ENCODE measurements at regions of chrX and their contacts with region 1.

Region 1: GRCh38 chrX:123949846-123950245 is 11.7 kb upstream of the STAG2 start:
- DNase-seq: no peak
- H3K4me3 ChIP-seq: no peak overlapping the region
- H3K4me3 Mint-ChIP-seq: no peak overlapping the region
- H3K27ac Mint-ChIP-seq: no peak overlapping the region
- H3K4me1 ChIP-seq: peaks cover 11% of the 10 kb centered on the region
- H3K4me1 Mint-ChIP-seq: peaks cover 11% of the 10 kb centered on the region
- H3K27me3 ChIP-seq: no peaks in the 10 kb centered on the region
- H3K27me3 Mint-ChIP-seq: no peaks in the 10 kb centered on the region
- CTCF ChIP-seq: no peak

Region 2: DNA sequence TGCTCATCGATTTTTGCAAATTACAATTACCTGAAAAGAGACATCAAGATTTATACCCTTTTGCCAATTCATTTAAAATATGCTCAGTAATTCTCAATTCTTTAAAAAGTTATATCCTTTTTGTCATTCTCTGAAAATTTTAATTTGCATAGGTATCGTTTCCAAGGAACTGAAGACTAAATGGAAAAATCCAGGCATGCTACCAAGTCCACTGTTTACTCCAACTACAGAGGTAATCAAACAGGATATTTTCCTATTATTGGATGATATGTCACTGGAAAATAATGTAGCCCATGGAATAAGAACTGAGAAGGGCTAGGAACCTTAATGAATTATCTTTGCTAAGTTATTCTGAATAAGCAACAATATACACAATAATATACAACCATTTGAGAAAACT is 349.7 kb before region 1 on chrX:
- CTCF ChIA-PET with region 1: no interaction called
- POLR2A ChIA-PET with region 1: interaction called, 10 read pairs
- intact Hi-C with region 1: no loop called
- DNase-seq: no peak
- H3K4me3 ChIP-seq: no peak overlapping the region
- H3K4me3 Mint-ChIP-seq: no peak overlapping the region
- H3K27ac Mint-ChIP-seq: no peak overlapping the region
- H3K4me1 ChIP-seq: no peaks in the 10 kb centered on the region
- H3K4me1 Mint-ChIP-seq: no peaks in the 10 kb centered on the region
- H3K27me3 ChIP-seq: no peaks in the 10 kb centered on the region
- H3K27me3 Mint-ChIP-seq: no peaks in the 10 kb centered on the region
- CTCF ChIP-seq: no peak

Region 3: GRCh38 chrX:123918106-123918729 is 31.6 kb before region 1 on chrX:
- CTCF ChIA-PET with region 1: no interaction called
- POLR2A ChIA-PET with region 1: no interaction called
- intact Hi-C with region 1: loop called (anchors 5 kb)
- DNase-seq: no peak
- H3K4me3 ChIP-seq: no peak overlapping the region
- H3K4me3 Mint-ChIP-seq: peak overlapping the region; percentile 39
- H3K27ac Mint-ChIP-seq: no peak overlapping the region
- H3K4me1 ChIP-seq: peaks cover 29% of the 10 kb centered on the region
- H3K4me1 Mint-ChIP-seq: no peaks in the 10 kb centered on the region
- H3K27me3 ChIP-seq: no peaks in the 10 kb centered on the region
- H3K27me3 Mint-ChIP-seq: no peaks in the 10 kb centered on the region
- CTCF ChIP-seq: no peak

Region 4: GRCh38 chrX:123993326-123993725 is 43.5 kb after region 1 on chrX:
- CTCF ChIA-PET with region 1: no interaction called
- POLR2A ChIA-PET with region 1: no interaction called
- intact Hi-C with region 1: no loop called
- DNase-seq: no peak
- H3K4me3 ChIP-seq: no peak overlapping the region
- H3K4me3 Mint-ChIP-seq: no peak overlapping the region
- H3K27ac Mint-ChIP-seq: no peak overlapping the region
- H3K4me1 ChIP-seq: peaks cover 13% of the 10 kb centered on the region; the same call in 1 of the 2 replicates
- H3K4me1 Mint-ChIP-seq: peaks cover 14% of the 10 kb centered on the region
- H3K27me3 ChIP-seq: no peaks in the 10 kb centered on the region
- H3K27me3 Mint-ChIP-seq: no peaks in the 10 kb centered on the region
- CTCF ChIP-seq: no peak

Region 5: DNA sequence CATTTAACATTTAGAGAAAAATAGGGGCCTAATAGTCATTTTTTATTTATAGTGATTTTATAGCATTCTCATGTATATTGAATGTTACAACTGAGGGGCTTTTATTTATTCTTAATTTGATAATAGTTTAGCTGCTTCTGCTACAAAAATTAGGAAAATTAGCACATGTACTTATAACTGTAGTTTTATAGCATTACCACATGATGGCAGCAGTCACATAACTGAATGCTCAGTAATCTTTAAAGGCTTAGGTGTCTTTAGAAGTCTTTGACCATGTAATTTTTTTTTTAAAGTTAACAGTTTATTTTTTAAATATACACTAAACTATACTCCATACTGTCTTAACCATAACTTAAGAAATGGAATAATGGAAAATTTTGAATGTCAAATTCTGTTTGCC is 148.2 kb after region 1 on chrX:
- CTCF ChIA-PET with region 1: no interaction called
- POLR2A ChIA-PET with region 1: no interaction called
- intact Hi-C with region 1: no loop called
- DNase-seq: peak in 1 of 2 experiments; percentile 7
- H3K4me3 ChIP-seq: no peak overlapping the region
- H3K4me3 Mint-ChIP-seq: no peak overlapping the region
- H3K27ac Mint-ChIP-seq: no peak overlapping the region
- H3K4me1 ChIP-seq: no peaks in the 10 kb centered on the region
- H3K4me1 Mint-ChIP-seq: no peaks in the 10 kb centered on the region
- H3K27me3 ChIP-seq: no peaks in the 10 kb centered on the region
- H3K27me3 Mint-ChIP-seq: no peaks in the 10 kb centered on the region
- CTCF ChIP-seq: peak; percentile 15 to 42